Heart left ventricle (tissue), 16 donors: ENCODE measurements at regions of chr5 and their contacts with region 1.

Region 1: GRCh38 chr5:113336975-113337374 is 97.8 kb downstream of the TSSK1B start:
- DNase-seq: peak in 4 of 5 donors; percentile 39 to 53 (median 40)
- ATAC-seq: peak; percentile 72 to 93 (median 89)
- H3K4me3 ChIP-seq: no peak overlapping the region
- H3K27ac ChIP-seq: no peak overlapping the region
- H3K4me1 ChIP-seq: peaks cover 0 to 15% (median 0%) of the 10 kb centered on the region in 12 donors
- H3K27me3 ChIP-seq: no peaks in the 10 kb centered on the region
- CTCF ChIP-seq: peak; percentile 33 to 70 (median 50)
- POLR2A ChIP-seq: no peak

Region 2: DNA sequence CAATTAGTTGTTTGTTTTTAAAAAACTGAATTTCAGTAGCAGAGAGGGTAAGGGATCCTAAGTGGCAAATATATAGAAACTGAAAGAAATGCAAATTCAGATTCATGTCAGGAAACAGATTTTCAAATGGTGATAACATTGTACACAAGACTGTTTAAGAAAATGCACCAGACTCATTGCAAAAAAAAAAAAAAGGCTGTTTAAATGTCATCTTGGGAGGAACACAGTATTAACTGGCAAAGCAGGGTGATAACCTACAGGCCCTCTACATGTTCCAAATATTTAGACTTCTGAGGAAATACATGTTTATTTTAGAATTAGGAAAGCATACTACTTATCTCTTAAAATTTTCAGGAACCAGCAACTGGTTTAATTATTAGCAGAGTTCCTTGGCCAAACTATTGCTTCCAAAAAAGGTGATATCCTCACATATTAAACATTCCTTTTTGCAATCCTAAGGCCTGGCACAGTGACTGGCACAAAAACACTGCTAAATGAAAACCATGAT is 16.6 kb before region 1 on chr5:
- intact Hi-C with region 1: no loop called
- DNase-seq: no peak
- ATAC-seq: no peak
- H3K4me3 ChIP-seq: no peak overlapping the region
- H3K27ac ChIP-seq: peak overlapping the region in 1 of 12 donors; percentile 13
- H3K4me1 ChIP-seq: peaks cover 0 to 18% (median 5%) of the 10 kb centered on the region in 12 donors
- H3K27me3 ChIP-seq: no peaks in the 10 kb centered on the region
- CTCF ChIP-seq: no peak
- POLR2A ChIP-seq: no peak

Region 3: DNA sequence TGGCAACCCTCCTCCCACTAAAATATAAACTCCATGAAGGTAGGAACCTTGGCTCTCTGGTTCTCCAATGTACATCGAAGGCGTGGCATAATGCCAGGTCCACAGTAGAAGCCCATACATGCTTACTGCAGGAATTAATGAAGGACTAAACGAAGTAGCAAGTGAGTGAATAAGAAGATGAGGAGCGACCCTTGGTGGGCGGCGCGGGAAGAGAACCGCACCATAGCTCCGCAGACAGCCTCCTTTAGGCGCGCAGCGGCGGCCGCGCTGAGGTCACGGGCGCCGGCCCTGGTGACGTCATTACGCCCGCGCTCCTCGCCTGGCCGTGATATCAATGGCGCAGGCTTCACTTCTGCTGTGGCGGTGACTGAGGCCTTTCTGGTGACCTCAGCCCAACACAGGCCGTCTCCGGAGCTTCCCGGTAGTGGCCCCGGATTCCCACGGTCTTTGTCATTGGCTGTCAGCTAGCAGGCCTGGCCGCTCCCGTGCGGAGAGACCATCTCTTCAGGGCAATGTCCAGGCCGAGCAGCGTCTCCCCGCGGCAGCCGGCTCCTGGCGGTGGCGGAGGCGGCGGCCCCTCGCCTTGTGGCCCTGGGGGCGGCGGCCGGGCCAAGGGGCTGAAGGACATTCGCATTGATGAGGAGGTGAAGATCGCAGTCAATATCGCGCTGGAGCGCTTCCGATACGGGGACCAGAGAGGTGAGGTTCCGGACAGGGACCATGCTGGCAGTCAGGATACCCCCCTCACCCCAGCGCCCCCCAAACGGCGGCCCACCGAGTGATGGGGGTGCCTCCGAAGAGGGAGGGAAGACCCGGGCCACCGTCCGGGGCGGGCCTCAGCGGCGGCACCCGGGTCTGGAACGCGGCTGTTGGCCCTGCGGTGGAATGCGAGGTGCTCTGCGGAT is 176.7 kb after region 1 on chr5 and contains the start of gene YTHDC2:
- intact Hi-C with region 1: loop called in 9 of 10 experiments (anchors 2 to 5 kb)
- DNase-seq: peak; percentile 88 to 95 (median 91)
- ATAC-seq: peak; percentile 95 to 98 (median 98)
- H3K4me3 ChIP-seq: peak within 1 kb of the TSS; percentile 77 to 96 (median 82)
- H3K27ac ChIP-seq: peak within 1 kb of the TSS; percentile 70 to 97 (median 92)
- H3K4me1 ChIP-seq: peaks cover 0 to 37% (median 16%) of the 10 kb centered on the region in 12 donors
- H3K27me3 ChIP-seq: peaks cover 0 to 13% (median 0%) of the 10 kb centered on the region in 9 donors
- CTCF ChIP-seq: peak in 10 of 12 donors; percentile 8 to 58 (median 32)
- POLR2A ChIP-seq: peak in 1 of 2 donors; percentile 73
- total RNA-seq, gene YTHDC2: 9.4 to 19.8 (median 15.1) TPM